K562 (cell line): ENCODE measurements at regions of chr21 and their contacts with region 1.

Region 1: DNA sequence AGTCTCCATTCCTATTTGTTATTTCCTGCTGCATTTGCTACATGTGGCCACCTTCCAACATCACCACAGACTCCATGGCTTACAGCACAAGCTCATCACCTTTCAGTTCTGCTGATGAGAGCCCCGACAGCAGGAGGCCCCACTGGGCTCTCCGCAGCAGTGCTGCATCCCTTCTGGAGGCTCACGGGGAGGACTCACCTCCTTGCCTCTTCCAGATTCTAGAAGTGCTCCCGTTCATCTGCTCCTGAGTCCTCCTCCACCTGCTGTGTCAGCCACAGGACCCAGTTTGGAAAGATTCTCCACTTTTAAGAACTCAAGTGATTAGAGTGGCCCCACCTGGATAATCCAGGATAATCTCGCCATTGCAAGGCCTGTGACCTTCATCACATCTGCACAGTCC is 167.6 kb downstream of the PCBP3 start:
- DNase-seq: no peak
- ATAC-seq: no peak
- H3K4me3 ChIP-seq: no peak overlapping the region
- H3K27ac ChIP-seq: no peak overlapping the region
- H3K4me1 ChIP-seq: no peaks in the 10 kb centered on the region
- H3K27me3 ChIP-seq: peaks cover 0 to 14% of the 10 kb centered on the region in 2 experiments; a peak in 2 of 5 replicates
- CTCF ChIP-seq: no peak
- EP300 ChIP-seq: no peak
- POLR2A ChIP-seq: no peak
- RAD21 ChIP-seq: no peak

Region 2: DNA sequence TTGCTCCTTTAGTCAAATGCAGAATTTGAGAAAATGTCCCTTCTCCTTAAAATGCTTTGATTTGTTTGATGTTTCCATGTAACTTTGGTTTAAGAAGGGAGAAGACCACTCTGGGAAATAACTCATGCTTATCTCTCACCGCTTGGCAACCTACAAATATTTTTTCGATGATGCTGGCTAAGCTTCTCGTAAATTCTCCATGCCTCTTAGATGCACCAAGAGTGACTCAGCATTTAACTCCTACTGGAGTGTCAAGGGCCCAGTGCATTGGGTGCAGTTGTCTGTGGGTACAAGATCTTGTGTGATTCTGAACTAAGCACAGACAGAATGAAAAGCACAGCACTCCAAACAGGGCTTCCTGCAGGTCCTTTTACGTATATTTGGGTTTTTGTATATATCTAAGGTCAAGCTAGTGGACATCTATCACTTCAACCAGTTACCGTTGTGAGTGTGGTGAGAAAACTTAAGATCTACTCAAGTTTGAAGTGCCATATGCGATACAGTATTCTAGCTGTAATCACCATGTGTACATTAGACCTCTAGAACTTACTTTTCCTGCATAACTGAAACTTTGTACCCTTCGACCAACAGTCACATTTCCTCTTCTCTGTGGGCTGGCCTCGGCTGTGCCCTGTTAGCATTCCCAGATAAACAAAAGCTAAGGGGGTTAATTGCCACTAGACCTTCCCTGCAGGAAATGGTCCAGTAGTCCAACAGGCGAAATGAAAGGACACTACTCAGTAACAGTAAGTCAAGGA is 350.3 kb before region 1 on chr21:
- CTCF ChIA-PET with region 1: no interaction called
- POLR2A ChIA-PET with region 1: no interaction called
- in situ Hi-C with region 1: loop called (anchors 5 kb)
- intact Hi-C with region 1: no loop called
- DNase-seq: peak in 1 of 4 experiments; percentile 24
- ATAC-seq: no peak
- H3K4me3 ChIP-seq: no peak overlapping the region
- H3K27ac ChIP-seq: no peak overlapping the region
- H3K4me1 ChIP-seq: peaks cover 0 to 49% of the 10 kb centered on the region in 2 experiments; a peak in 3 of 5 replicates
- H3K27me3 ChIP-seq: peaks cover 12 to 28% of the 10 kb centered on the region in 2 experiments; a peak in 4 of 5 replicates
- CTCF ChIP-seq: no peak
- EP300 ChIP-seq: 0 out of 2 replicates have a peak, but pooled peaks have one; percentile 5
- POLR2A ChIP-seq: no peak
- RAD21 ChIP-seq: no peak

Region 3: DNA sequence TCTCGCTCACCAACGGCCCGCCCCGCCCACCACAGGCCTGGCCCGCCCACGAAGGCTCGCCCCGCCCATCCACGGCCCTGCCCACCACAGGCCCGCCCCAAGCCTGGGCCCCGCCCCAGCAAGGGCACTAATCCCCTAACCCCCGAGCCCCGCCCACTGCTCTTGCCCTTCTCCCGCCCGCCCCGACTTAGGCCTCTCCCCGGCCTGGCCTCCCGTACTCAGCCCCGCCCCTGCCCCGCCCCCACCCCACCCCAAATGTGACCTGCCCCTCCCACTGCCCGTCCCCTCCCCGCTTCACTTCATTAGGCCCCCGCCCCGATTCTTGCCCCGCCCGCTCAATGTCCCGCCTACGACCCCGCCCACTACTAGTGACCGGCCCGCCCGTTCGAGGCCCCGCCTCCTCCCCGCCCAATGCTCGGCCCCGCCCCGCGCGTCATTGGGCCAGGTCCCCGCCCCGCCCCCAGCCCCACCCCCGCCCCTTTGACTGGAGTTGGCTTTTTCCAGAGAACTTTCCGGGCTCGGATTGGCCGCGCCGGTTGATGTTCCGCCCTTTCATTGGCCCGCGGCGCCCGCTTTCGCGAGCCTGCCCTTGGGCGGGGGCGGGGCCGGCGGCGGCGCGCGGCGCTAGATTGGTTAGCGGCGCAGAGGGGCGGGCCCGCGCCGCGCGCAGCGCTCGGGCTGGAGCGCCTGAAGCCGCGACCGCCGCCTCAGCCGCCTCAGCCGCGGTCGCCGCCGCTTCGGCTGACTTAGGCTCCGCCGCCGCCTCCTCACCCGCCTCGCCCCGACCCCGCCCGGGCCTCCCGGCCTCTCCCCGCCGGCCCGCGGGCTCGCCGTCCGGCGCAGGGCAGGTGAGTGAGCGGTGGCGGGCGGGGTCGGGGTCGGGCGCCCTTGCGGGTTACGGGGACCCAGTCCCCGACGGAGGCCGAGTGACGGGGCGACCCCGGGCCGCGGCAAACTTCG is 167.8 kb before region 1 on chr21 and contains the start of gene PCBP3:
- CTCF ChIA-PET with region 1: no interaction called
- POLR2A ChIA-PET with region 1: no interaction called
- in situ Hi-C with region 1: no loop called
- intact Hi-C with region 1: no loop called
- DNase-seq: peak; percentile 96 to 99 (median 98)
- ATAC-seq: peak; percentile 97
- H3K4me3 ChIP-seq: peak within 1 kb of the TSS; percentile 43
- H3K27ac ChIP-seq: no peak within 1 kb of the TSS
- H3K4me1 ChIP-seq: peaks cover 0 to 28% of the 10 kb centered on the region in 2 experiments; a peak in 2 of 5 replicates
- H3K27me3 ChIP-seq: peaks cover 10 to 12% of the 10 kb centered on the region in 2 experiments; a peak in 3 of 5 replicates
- CTCF ChIP-seq: no peak
- EP300 ChIP-seq: no peak
- POLR2A ChIP-seq: no peak
- RAD21 ChIP-seq: no peak
- polyA plus RNA-seq, gene PCBP3: not detected